ENCODE measurements at regions of chr10 and their contacts with region 1.

Region 1: DNA sequence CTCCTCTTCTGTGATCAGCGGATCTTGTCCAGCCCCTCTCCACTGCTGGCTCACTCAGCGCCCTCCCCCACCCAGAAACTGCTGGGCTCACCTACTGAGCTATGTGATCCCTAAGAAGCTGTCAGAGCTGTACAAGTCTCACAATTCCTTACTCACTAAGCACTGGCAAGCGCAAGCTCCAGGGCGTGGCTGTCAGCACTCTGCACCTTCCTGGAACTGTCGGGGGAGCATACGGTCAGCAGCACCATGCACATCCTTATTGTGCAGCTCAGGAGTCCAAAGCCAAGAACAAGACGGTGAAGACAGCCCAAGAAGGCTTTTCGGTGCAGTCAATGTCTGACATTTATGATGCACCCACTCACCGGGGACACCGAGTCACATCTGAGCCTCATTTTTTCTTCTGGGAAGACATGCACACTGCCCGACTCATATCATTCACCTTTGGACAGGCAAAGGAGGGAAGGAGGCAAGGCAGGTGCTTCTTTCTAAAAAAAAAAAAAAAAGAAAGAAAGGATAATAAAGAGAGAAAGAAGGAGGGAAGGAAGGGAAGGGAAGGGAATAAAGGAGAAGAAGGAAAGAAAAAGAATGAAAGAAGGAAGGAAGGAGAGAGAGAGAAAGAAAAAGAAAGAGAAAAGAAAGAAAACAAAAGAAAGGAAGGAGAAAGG is 56.3 kb downstream of the ASB13 start:
- DNase-seq: peak; percentile 40 to 52 (median 46)
- ATAC-seq: peak; percentile 74
- H3K4me3 ChIP-seq: no peak overlapping the region
- H3K27ac ChIP-seq: no peak overlapping the region
- H3K4me1 ChIP-seq: peaks cover 4 to 5% of the 10 kb centered on the region in 2 experiments; a peak in 2 of 5 replicates
- H3K27me3 ChIP-seq: peaks cover 0 to 6% of the 10 kb centered on the region in 2 experiments; a peak in 1 of 5 replicates
- CTCF ChIP-seq: no peak
- EP300 ChIP-seq: no peak
- POLR2A ChIP-seq: no peak
- RAD21 ChIP-seq: no peak

Region 2: GRCh38 chr10:5446390-5446926 is 163.6 kb before region 1 on chr10:
- CTCF ChIA-PET with region 1: no interaction called
- POLR2A ChIA-PET with region 1: interaction called, 5 read pairs
- in situ Hi-C with region 1: no loop called
- intact Hi-C with region 1: loop called (anchors 5 kb)
- DNase-seq: peak; percentile 97 to 98 (median 97)
- ATAC-seq: peak; percentile 87
- H3K4me3 ChIP-seq: peak overlapping the region; percentile 56
- H3K27ac ChIP-seq: peak overlapping the region; percentile 74
- H3K4me1 ChIP-seq: peaks cover 4 to 23% of the 10 kb centered on the region in 2 experiments
- H3K27me3 ChIP-seq: no peaks in the 10 kb centered on the region
- CTCF ChIP-seq: no peak
- EP300 ChIP-seq: no peak
- POLR2A ChIP-seq: peak; percentile 98
- RAD21 ChIP-seq: peak; percentile 29 to 31; a peak in 3 of 4 replicates